Testis (tissue), 5 donors: ENCODE measurements at regions of chr15 and their contacts with region 1.

Region 1: DNA sequence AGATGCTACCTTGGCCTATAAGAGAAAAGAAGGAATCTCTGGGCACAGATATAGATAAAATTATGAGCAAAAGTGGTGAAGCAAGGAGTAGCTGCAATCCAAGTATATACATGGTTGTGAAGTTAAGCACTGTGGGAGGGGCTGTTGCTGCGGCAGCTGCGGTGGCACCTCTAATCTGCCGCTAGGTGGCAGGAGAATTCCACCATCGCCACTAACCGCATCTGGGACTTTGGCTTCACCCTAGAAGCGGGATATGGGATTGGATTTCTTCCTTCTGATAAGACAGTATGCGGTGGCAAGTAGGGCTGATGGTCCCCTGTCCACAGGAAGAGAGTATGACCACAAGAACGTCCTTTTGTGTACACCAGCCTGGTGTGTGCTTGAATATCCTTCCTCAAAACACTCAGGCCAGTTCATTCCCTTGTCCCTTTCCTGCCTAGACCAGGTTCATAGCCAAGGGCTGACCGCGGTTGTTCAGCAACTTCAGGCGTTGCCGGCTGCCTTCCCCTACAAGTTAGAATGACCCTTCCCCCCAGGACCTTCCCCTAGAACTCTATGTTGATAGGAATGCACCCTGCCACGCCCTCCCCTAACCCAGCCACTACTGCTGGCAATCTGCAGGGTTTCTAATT is 5.1 kb downstream of the MAGEL2 start:
- DNase-seq: peak; percentile 74
- H3K4me3 ChIP-seq: no peak overlapping the region
- H3K27ac ChIP-seq: no peak overlapping the region
- H3K4me1 ChIP-seq: no peaks in the 10 kb centered on the region
- H3K27me3 ChIP-seq: no peaks in the 10 kb centered on the region
- CTCF ChIP-seq: peak; percentile 54 to 86 (median 80)
- POLR2A ChIP-seq: no peak

Region 2: DNA sequence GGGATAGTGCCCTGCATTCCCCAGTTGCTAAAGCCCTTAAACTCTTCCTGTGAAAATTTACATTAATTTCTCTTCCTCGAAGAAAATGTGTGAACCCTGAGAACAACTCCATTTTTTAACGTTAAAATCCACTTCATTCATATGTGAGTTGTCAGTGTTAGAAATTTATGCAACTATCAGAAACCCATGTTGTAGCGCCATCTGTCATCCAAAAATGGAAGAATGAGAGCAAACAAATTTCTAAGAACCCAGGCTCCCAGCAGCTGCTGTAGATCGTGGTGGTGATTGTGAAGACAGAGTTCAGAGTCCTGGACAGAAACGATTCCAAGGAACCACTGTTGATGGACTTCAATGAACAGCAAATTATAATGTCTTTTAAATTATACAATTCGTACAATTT is 224.3 kb after region 1 on chr15:
- intact Hi-C with region 1: loop called (anchors 10 kb)
- DNase-seq: no peak
- H3K4me3 ChIP-seq: no peak overlapping the region
- H3K27ac ChIP-seq: no peak overlapping the region
- H3K4me1 ChIP-seq: no peaks in the 10 kb centered on the region
- H3K27me3 ChIP-seq: no peaks in the 10 kb centered on the region
- CTCF ChIP-seq: peak in 1 of 3 experiments; percentile 19
- POLR2A ChIP-seq: no peak